Motor neuron (in vitro differentiated cells): ENCODE measurements at regions of chr12 and their contacts with region 1.

Region 1: GRCh38 chr12:69570545-69571399 is 14.5 kb upstream of the CCT2 start:
- ATAC-seq: peak in 5 of 8 experiments; percentile 45 to 86 (median 70)
- H3K4me3 ChIP-seq: no peak overlapping the region
- H3K27ac ChIP-seq: no peak overlapping the region
- H3K4me1 ChIP-seq: no peaks in the 10 kb centered on the region

Region 2: GRCh38 chr12:69415471-69416275 is 155.1 kb before region 1 on chr12:
- in situ Hi-C with region 1: loop called in 1 of 9 experiments (anchors 10 kb)
- ATAC-seq: peak in 4 of 8 experiments; percentile 54 to 99 (median 99)
- H3K4me3 ChIP-seq: no peak overlapping the region
- H3K27ac ChIP-seq: no peak overlapping the region
- H3K4me1 ChIP-seq: no peaks in the 10 kb centered on the region